IMR-90 (cell line): ENCODE measurements at regions of chr4 and their contacts with region 1.

Region 1: GRCh38 chr4:13920901-13921300 is 293.4 kb upstream of the BOD1L1 start:
- DNase-seq: peak; percentile 100
- ATAC-seq: peak; percentile 68
- H3K4me3 ChIP-seq: no peak overlapping the region
- H3K27ac ChIP-seq: peak overlapping the region; percentile 73; the same call in 1 of the 2 replicates
- H3K4me1 ChIP-seq: peaks cover 24% of the 10 kb centered on the region
- H3K27me3 ChIP-seq: no peaks in the 10 kb centered on the region
- CTCF ChIP-seq: no peak
- POLR2A ChIP-seq: no peak; the same call in 1 of the 2 replicates
- RAD21 ChIP-seq: peak; percentile 48

Region 2: GRCh38 chr4:13511101-13511500 is 409.8 kb before region 1 on chr4:
- CTCF ChIA-PET with region 1: no interaction called
- POLR2A ChIA-PET with region 1: no interaction called
- dilution Hi-C with region 1: no loop called
- in situ Hi-C with region 1: no loop called
- intact Hi-C with region 1: no loop called
- DNase-seq: no peak
- ATAC-seq: no peak
- H3K4me3 ChIP-seq: no peak overlapping the region
- H3K27ac ChIP-seq: no peak overlapping the region
- H3K4me1 ChIP-seq: no peaks in the 10 kb centered on the region
- H3K27me3 ChIP-seq: no peaks in the 10 kb centered on the region; the same call in none of the 2 replicates
- CTCF ChIP-seq: no peak
- POLR2A ChIP-seq: no peak
- RAD21 ChIP-seq: no peak

Region 3: DNA sequence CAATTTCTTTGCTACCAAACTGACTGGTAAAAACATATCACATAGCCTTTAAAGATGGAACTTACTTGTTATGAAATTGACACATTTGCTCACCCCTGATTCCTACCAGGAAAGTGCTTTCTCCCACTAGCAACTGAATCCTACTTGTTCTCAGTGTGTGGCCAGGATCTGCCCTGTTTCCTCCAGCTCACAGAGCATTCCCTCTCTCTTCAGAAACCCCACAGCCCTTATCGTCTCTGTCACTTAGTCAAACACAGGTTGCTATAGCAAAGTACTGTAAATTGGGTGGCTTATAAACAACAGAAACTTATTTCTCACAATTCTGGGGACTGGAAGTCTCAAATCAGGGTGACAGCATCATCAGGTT is 28.2 kb before region 1 on chr4:
- CTCF ChIA-PET with region 1: no interaction called
- POLR2A ChIA-PET with region 1: no interaction called
- dilution Hi-C with region 1: no loop called
- in situ Hi-C with region 1: no loop called
- intact Hi-C with region 1: loop called (anchors 1 kb)
- DNase-seq: peak; percentile 65
- ATAC-seq: peak; percentile 42
- H3K4me3 ChIP-seq: no peak overlapping the region; the same call in 1 of the 2 replicates
- H3K27ac ChIP-seq: peak overlapping the region; percentile 96
- H3K4me1 ChIP-seq: peaks cover 28% of the 10 kb centered on the region
- H3K27me3 ChIP-seq: no peaks in the 10 kb centered on the region
- CTCF ChIP-seq: no peak
- POLR2A ChIP-seq: 0 out of 2 replicates have a peak, but pooled peaks have one; percentile 19
- RAD21 ChIP-seq: no peak

Region 4: GRCh38 chr4:13988353-13989305 is 67.7 kb after region 1 on chr4:
- CTCF ChIA-PET with region 1: no interaction called
- POLR2A ChIA-PET with region 1: no interaction called
- dilution Hi-C with region 1: no loop called
- in situ Hi-C with region 1: no loop called
- intact Hi-C with region 1: loop called (anchors 2 kb)
- DNase-seq: peak; percentile 97
- ATAC-seq: peak; percentile 73
- H3K4me3 ChIP-seq: no peak overlapping the region
- H3K27ac ChIP-seq: peak overlapping the region; percentile 39
- H3K4me1 ChIP-seq: peaks cover 18% of the 10 kb centered on the region
- H3K27me3 ChIP-seq: no peaks in the 10 kb centered on the region
- CTCF ChIP-seq: no peak
- POLR2A ChIP-seq: no peak
- RAD21 ChIP-seq: no peak; the same call in 1 of the 2 replicates

Region 5: GRCh38 chr4:14022456-14022855 is 101.6 kb after region 1 on chr4:
- CTCF ChIA-PET with region 1: no interaction called
- POLR2A ChIA-PET with region 1: no interaction called
- dilution Hi-C with region 1: no loop called
- in situ Hi-C with region 1: no loop called
- intact Hi-C with region 1: no loop called
- DNase-seq: peak; percentile 50
- ATAC-seq: peak; percentile 76; the same call in 1 of the 2 replicates
- H3K4me3 ChIP-seq: no peak overlapping the region
- H3K27ac ChIP-seq: no peak overlapping the region
- H3K4me1 ChIP-seq: no peaks in the 10 kb centered on the region; the same call in 1 of the 2 replicates
- H3K27me3 ChIP-seq: no peaks in the 10 kb centered on the region
- CTCF ChIP-seq: no peak
- POLR2A ChIP-seq: no peak
- RAD21 ChIP-seq: no peak

Region 6: DNA sequence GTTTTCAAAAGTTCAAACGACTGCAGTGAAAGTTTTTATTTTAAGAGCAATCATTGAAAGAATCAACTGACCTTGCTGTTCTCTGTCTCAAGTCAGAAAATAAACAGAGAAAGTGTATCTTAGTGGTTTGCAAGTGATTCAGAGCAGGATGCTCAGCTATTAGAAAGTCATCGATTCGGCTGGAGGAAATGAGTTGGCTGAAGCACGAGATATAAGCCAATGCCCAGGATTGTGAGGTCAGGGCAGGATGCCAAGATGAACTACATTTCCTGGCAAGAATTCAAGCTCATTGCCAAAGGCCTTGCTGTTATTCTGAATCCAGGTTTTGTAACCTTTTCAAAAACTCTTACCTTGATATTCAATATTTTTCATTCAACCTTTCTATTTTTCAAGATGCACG is 248.0 kb after region 1 on chr4:
- CTCF ChIA-PET with region 1: no interaction called
- POLR2A ChIA-PET with region 1: no interaction called
- dilution Hi-C with region 1: no loop called
- in situ Hi-C with region 1: no loop called
- intact Hi-C with region 1: loop called (anchors 5 kb)
- DNase-seq: peak; percentile 91
- ATAC-seq: peak; percentile 83
- H3K4me3 ChIP-seq: no peak overlapping the region
- H3K27ac ChIP-seq: no peak overlapping the region
- H3K4me1 ChIP-seq: peaks cover 6% of the 10 kb centered on the region; the same call in 1 of the 2 replicates
- H3K27me3 ChIP-seq: no peaks in the 10 kb centered on the region
- CTCF ChIP-seq: no peak
- POLR2A ChIP-seq: no peak
- RAD21 ChIP-seq: no peak

Region 7: DNA sequence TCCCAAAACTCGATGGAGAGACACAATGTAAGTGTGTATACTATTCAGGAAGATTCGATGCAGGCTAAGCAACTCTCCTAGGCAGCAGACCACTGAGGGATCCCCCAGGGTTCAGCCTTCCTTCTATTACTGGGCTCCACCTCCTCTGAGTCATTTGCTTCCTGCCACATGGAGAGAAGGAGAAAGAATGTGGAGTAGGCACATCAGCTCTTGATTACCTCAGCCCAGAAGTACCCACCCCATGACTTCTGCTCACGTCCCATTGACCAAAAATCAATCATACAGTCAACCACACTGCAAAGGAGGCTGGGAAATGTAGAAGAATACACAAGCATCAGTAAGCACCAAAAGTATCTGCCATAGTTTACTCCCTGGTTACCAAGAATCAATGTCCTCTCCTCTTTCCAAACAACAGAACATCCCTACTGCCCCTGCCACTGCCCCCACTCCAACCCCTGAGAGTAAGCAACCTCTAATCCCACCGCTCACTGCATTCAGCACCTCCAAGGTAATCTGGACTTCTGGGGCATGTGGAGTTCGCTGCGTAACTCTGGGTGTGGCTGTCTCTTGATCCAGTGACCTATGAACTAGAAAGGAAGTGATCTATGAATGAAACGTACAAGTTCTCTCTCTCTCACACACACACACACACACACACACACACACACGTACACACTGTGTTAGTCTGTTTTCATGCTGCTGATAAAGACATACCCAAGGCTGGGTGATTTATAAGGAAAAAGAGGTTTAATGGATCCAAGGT is 1415.7 kb after region 1 on chr4:
- CTCF ChIA-PET with region 1: no interaction called
- POLR2A ChIA-PET with region 1: no interaction called
- dilution Hi-C with region 1: no loop called
- in situ Hi-C with region 1: loop called (anchors 25 kb)
- intact Hi-C with region 1: no loop called
- DNase-seq: peak; percentile 92
- ATAC-seq: peak; percentile 76
- H3K4me3 ChIP-seq: no peak overlapping the region
- H3K27ac ChIP-seq: peak overlapping the region; percentile 10
- H3K4me1 ChIP-seq: peaks cover 10% of the 10 kb centered on the region
- H3K27me3 ChIP-seq: peaks cover 2% of the 10 kb centered on the region
- CTCF ChIP-seq: no peak
- POLR2A ChIP-seq: no peak
- RAD21 ChIP-seq: no peak